WTC11 (cell line): ENCODE measurements at regions of chr2 and their contacts with region 1.

Region 1: GRCh38 chr2:42086500-42086953 is 38.7 kb downstream of the PKDCC start:
- DNase-seq: peak; percentile 60
- ATAC-seq: peak; percentile 74
- H3K4me3 Mint-ChIP-seq: no peak overlapping the region
- H3K27ac Mint-ChIP-seq: no peak overlapping the region
- H3K4me1 Mint-ChIP-seq: peaks cover 7% of the 10 kb centered on the region
- H3K27me3 Mint-ChIP-seq: peaks cover 22% of the 10 kb centered on the region
- CTCF ChIP-seq: peak; percentile 75

Region 2: GRCh38 chr2:41840702-41841551 is 245.6 kb before region 1 on chr2:
- CTCF ChIA-PET with region 1: interaction called, 16 read pairs
- POLR2A ChIA-PET with region 1: no interaction called
- DNase-seq: peak; percentile 98
- ATAC-seq: peak; percentile 99
- H3K4me3 Mint-ChIP-seq: peak overlapping the region; percentile 90
- H3K27ac Mint-ChIP-seq: 0 out of 2 replicates have a peak overlapping the region, but pooled peaks have one; percentile 3
- H3K4me1 Mint-ChIP-seq: peaks cover 5% of the 10 kb centered on the region
- H3K27me3 Mint-ChIP-seq: peaks cover 44% of the 10 kb centered on the region
- CTCF ChIP-seq: peak; percentile 95

Region 3: GRCh38 chr2:41853427-41854216 is 232.9 kb before region 1 on chr2:
- CTCF ChIA-PET with region 1: interaction called, 127 read pairs
- POLR2A ChIA-PET with region 1: interaction called, 4 read pairs
- DNase-seq: peak; percentile 70
- ATAC-seq: peak; percentile 77
- H3K4me3 Mint-ChIP-seq: no peak overlapping the region
- H3K27ac Mint-ChIP-seq: no peak overlapping the region
- H3K4me1 Mint-ChIP-seq: peaks cover 6% of the 10 kb centered on the region
- H3K27me3 Mint-ChIP-seq: peaks cover 3% of the 10 kb centered on the region; the same call in 1 of the 2 replicates
- CTCF ChIP-seq: peak; percentile 65

Region 4: GRCh38 chr2:42047488-42048298 is 38.8 kb before region 1 on chr2 and contains the start of gene PKDCC:
- CTCF ChIA-PET with region 1: interaction called, 11 read pairs
- POLR2A ChIA-PET with region 1: no interaction called
- DNase-seq: peak; percentile 85
- ATAC-seq: peak; percentile 66
- H3K4me3 Mint-ChIP-seq: peak within 1 kb of the TSS; percentile 79
- H3K27ac Mint-ChIP-seq: peak within 1 kb of the TSS; percentile 80; the same call in 1 of the 2 replicates
- H3K4me1 Mint-ChIP-seq: peaks cover 72% of the 10 kb centered on the region
- H3K27me3 Mint-ChIP-seq: peaks cover 20% of the 10 kb centered on the region
- CTCF ChIP-seq: no peak
- total RNA-seq, gene PKDCC: 15.1 to 27.3 TPM (median 15.6 TPM) in 3 replicates

Region 5: DNA sequence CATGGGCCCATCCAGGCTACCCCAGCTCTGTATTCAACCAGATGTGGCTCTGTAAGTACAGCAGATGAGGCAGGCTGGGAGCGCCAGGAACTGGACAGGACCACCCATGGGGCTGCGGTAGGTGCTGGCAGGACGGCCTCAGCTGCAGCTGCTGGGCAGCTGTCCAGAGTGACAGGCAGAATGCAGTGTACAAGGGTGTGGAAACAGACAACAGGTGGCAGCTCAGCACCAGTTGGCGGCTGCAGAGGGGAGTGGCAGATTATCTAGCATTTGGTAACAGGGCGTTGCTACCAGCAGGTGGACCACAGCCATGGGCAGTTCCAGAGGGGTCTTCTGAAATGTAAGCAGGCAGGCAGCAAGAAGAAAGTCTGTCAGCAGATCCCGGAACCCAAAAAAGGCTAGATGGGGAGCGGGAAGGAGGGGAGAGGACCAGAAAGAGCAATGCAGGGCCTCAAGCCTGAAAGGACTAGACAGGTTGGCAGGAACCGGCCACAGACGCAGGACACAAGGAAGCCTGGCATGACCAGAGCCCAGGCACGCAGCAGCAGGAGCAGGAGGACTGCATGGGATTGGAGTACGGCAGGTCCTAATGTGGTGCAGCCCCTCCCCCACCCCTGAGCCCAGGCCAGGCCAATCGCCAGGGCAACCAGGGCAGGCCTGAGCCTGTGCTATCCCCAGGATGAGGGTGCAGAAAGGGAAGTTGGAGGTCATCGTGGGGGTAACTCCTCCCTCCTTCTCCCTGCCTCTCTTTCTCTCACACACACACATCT is 14.0 kb before region 1 on chr2:
- CTCF ChIA-PET with region 1: interaction called, 18 read pairs
- POLR2A ChIA-PET with region 1: no interaction called
- DNase-seq: peak; percentile 34
- ATAC-seq: peak; percentile 80
- H3K4me3 Mint-ChIP-seq: no peak overlapping the region
- H3K27ac Mint-ChIP-seq: no peak overlapping the region
- H3K4me1 Mint-ChIP-seq: peaks cover 19% of the 10 kb centered on the region
- H3K27me3 Mint-ChIP-seq: no peaks in the 10 kb centered on the region; the same call in 1 of the 2 replicates
- CTCF ChIP-seq: no peak